Astrocyte of the cerebellum (primary cell): ENCODE measurements at regions of chr2 and their contacts with region 1.

Region 1: GRCh38 chr2:119059287-119059686 is 99.3 kb downstream of the C1QL2 start:
- DNase-seq: no peak
- H3K4me3 ChIP-seq: no peak overlapping the region
- CTCF ChIP-seq: no peak

Region 2: DNA sequence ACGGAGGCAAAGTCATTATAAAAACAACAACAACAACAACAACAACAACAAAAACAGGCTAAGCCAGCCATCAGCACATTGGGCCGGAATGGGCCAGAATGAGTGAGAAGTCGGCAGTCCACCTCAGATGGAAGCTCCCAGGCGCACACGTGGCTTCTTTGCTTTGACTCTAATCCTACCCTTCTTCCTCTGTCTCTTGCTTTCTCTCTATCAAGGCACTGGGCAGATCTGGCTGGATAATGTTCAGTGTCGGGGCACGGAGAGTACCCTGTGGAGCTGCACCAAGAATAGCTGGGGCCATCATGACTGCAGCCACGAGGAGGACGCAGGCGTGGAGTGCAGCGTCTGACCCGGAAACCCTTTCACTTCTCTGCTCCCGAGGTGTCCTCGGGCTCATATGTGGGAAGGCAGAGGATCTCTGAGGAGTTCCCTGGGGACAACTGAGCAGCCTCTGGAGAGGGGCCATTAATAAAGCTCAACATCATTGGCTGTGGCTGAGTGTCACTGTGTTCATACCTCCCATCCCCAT is 65.1 kb before region 1 on chr2:
- in situ Hi-C with region 1: no loop called
- DNase-seq: no peak
- H3K4me3 ChIP-seq: no peak overlapping the region
- CTCF ChIP-seq: no peak

Region 3: DNA sequence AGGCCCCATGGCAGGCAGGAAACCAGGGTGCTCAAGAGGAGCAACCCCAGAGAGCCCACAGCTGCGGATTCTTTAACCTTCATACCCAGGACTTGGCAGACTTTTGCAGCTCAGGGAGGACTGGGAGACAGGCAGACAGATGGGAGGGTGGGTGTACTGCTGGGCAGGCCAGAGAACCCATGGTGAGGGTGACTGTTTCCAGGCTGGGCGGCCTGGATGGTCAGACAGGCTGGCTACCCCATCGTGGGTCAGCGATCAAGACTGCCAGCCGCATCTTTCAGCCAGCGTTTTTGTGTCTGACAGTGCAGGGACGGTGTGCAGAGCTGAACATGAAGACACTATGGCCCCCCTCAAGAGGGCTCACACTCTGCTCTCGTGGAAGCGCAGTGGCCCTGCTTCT is 35.1 kb before region 1 on chr2:
- in situ Hi-C with region 1: loop called (anchors 5 kb)
- DNase-seq: no peak
- H3K4me3 ChIP-seq: no peak overlapping the region
- CTCF ChIP-seq: no peak

Region 4: GRCh38 chr2:119086327-119086726 is 27.0 kb after region 1 on chr2:
- in situ Hi-C with region 1: no loop called
- DNase-seq: no peak
- H3K4me3 ChIP-seq: no peak overlapping the region
- CTCF ChIP-seq: no peak

Region 5: GRCh38 chr2:119119999-119120756 is 60.9 kb after region 1 on chr2:
- in situ Hi-C with region 1: no loop called
- DNase-seq: no peak
- H3K4me3 ChIP-seq: no peak overlapping the region
- CTCF ChIP-seq: no peak